Breast epithelium (tissue), 4 donors: ENCODE measurements at regions of chr18 and their contacts with region 1.

Region 1: GRCh38 chr18:31722369-31722957 is 38.1 kb upstream of the B4GALT6 start:
- DNase-seq: peak; percentile 65 to 75
- H3K4me3 ChIP-seq: no peak overlapping the region
- H3K27ac ChIP-seq: no peak overlapping the region
- H3K4me1 ChIP-seq: no peaks in the 10 kb centered on the region
- H3K27me3 ChIP-seq: no peaks in the 10 kb centered on the region
- CTCF ChIP-seq: peak; percentile 53 to 62 (median 59)
- POLR2A ChIP-seq: no peak

Region 2: GRCh38 chr18:31049189-31049588 is 673.3 kb before region 1 on chr18:
- intact Hi-C with region 1: no loop called
- DNase-seq: no peak
- H3K4me3 ChIP-seq: no peak overlapping the region
- H3K27ac ChIP-seq: no peak overlapping the region
- H3K4me1 ChIP-seq: no peaks in the 10 kb centered on the region
- H3K27me3 ChIP-seq: no peaks in the 10 kb centered on the region
- CTCF ChIP-seq: no peak
- POLR2A ChIP-seq: no peak

Region 3: DNA sequence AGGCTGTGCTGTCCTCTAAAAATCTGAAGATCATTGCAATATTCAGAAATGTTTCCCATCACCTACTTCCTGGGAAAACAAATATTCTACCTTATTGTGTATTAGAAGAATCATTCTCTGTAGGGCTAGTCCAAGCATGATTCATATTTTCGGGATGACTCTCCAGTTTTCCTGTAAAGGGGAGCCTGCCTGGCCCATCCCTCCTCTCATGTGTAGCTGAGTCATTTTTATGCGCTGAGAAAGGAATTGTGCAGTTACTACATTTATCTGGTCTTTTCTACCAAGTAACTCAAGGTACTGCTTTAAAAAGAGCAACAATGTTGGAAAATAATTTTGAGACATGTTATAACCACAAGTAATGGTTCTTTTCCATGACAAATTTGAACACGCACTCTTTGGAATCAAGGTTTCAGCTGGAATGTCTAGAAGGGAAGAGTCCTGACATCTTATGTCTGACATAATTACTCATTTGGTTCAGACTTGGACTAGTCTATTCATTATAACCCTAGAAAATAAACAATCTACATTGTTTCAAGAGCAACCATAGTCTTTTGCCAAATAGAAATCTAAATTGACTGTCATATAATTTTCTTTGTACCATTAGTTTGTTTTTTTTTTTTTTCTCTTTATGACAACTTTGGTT is 268.3 kb before region 1 on chr18:
- intact Hi-C with region 1: no loop called
- DNase-seq: peak in 1 of 2 donors; percentile 54
- H3K4me3 ChIP-seq: no peak overlapping the region
- H3K27ac ChIP-seq: peak overlapping the region; percentile 63 to 74
- H3K4me1 ChIP-seq: no peaks in the 10 kb centered on the region
- H3K27me3 ChIP-seq: no peaks in the 10 kb centered on the region
- CTCF ChIP-seq: no peak
- POLR2A ChIP-seq: no peak

Region 4: DNA sequence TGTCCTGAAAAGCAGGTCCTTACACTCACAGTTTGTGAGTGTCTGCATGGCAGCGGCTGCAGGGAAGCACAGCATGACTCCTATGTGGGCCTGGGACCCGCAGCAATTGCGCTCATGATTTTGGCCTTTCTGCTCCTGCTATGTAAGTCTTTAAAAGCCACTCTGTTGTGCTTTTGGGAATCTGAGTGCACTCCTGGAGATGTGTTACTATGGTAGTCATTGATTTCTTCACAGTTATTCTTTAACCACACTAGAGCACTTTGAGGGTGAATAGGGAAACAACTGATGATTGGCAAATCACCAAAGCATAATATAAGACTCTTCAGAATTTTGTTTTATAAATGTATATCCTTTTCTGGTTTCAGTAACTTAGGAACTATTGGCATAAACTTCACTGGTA is 183.6 kb before region 1 on chr18:
- intact Hi-C with region 1: no loop called
- DNase-seq: no peak
- H3K4me3 ChIP-seq: no peak overlapping the region
- H3K27ac ChIP-seq: no peak overlapping the region
- H3K4me1 ChIP-seq: no peaks in the 10 kb centered on the region
- H3K27me3 ChIP-seq: no peaks in the 10 kb centered on the region
- CTCF ChIP-seq: no peak
- POLR2A ChIP-seq: no peak

Region 5: GRCh38 chr18:31555971-31556747 is 166.3 kb before region 1 on chr18:
- intact Hi-C with region 1: loop called (anchors 10 kb)
- DNase-seq: no peak
- H3K4me3 ChIP-seq: no peak overlapping the region
- H3K27ac ChIP-seq: no peak overlapping the region
- H3K4me1 ChIP-seq: no peaks in the 10 kb centered on the region
- H3K27me3 ChIP-seq: no peaks in the 10 kb centered on the region
- CTCF ChIP-seq: peak; percentile 48 to 83 (median 78)
- POLR2A ChIP-seq: no peak